Caco-2 (cell line): ENCODE measurements at regions of chr14 and their contacts with region 1.

Region 1: DNA sequence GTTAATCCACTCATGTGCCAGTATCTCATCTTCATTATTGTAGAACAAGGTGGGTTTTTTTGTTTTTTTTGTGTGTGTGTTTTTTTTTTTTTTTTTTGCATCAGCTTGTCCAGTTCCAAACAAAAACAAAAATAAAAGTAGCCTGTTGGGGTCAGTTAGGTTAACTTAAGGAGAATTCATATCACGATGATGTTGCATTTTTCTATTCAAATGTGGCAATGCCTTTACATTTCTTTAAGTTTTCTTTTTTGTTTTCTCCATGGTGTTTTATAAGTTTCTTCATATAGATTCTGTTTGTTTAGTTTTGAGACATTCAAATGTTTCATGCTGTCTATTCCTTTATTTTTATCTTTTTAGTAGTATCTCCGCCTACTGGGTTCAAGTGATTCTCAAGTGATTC is 16.2 kb upstream of the CATSPERB start:
- DNase-seq: no peak
- H3K4me3 ChIP-seq: no peak overlapping the region
- H3K4me3 Mint-ChIP-seq: no peak overlapping the region
- H3K27ac Mint-ChIP-seq: no peak overlapping the region
- H3K4me1 ChIP-seq: peaks cover 4% of the 10 kb centered on the region; the same call in 1 of the 2 replicates
- H3K4me1 Mint-ChIP-seq: no peaks in the 10 kb centered on the region
- H3K27me3 ChIP-seq: no peaks in the 10 kb centered on the region
- H3K27me3 Mint-ChIP-seq: no peaks in the 10 kb centered on the region
- CTCF ChIP-seq: no peak

Region 2: GRCh38 chr14:91774140-91775096 is 26.4 kb after region 1 on chr14:
- CTCF ChIA-PET with region 1: no interaction called
- POLR2A ChIA-PET with region 1: no interaction called
- intact Hi-C with region 1: loop called (anchors 1 kb)
- DNase-seq: no peak
- H3K4me3 ChIP-seq: no peak overlapping the region
- H3K4me3 Mint-ChIP-seq: no peak overlapping the region
- H3K27ac Mint-ChIP-seq: no peak overlapping the region
- H3K4me1 ChIP-seq: no peaks in the 10 kb centered on the region; the same call in 1 of the 2 replicates
- H3K4me1 Mint-ChIP-seq: no peaks in the 10 kb centered on the region
- H3K27me3 ChIP-seq: no peaks in the 10 kb centered on the region
- H3K27me3 Mint-ChIP-seq: no peaks in the 10 kb centered on the region
- CTCF ChIP-seq: no peak

Region 3: DNA sequence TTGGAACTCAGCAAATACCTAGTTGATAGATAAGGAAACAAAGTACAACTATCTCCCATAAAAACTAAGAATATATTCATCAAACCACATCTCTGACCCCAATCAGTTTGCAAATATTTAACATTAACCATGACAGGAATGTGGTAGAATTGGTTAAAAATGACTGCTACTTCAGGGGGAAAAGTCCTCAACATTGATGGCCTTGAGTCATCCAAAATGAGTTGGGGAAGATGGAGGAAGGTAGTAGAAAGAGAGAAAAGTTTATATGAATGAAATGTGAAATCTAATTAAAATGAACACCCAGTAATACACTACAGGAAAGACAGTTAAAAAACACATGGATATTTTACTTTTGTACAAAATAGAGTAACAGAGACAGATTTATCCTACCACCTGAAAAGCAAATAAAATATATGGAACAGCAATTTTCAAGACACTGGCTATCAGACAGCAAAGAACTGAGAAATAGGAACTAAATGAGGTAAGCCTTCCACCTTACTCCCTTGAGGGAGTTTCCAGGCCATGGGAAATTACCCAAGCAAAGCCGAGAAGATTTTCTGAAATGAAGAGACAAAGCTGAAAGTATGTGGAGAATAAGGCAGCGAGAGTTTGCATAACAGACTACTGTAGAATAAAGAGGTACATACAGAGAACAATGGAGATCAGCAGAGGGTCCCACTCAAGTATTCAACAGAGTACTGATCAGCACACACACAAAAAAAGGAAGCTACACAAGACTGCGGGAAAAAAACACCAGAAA is 69.7 kb after region 1 on chr14:
- CTCF ChIA-PET with region 1: no interaction called
- POLR2A ChIA-PET with region 1: no interaction called
- intact Hi-C with region 1: no loop called
- DNase-seq: no peak
- H3K4me3 ChIP-seq: no peak overlapping the region
- H3K4me3 Mint-ChIP-seq: peak overlapping the region; percentile 28
- H3K27ac Mint-ChIP-seq: peak overlapping the region; percentile 18
- H3K4me1 ChIP-seq: peaks cover 13% of the 10 kb centered on the region; the same call in 1 of the 2 replicates
- H3K4me1 Mint-ChIP-seq: peaks cover 35% of the 10 kb centered on the region
- H3K27me3 ChIP-seq: no peaks in the 10 kb centered on the region
- H3K27me3 Mint-ChIP-seq: no peaks in the 10 kb centered on the region
- CTCF ChIP-seq: no peak